HEK293 (cell line): ENCODE measurements at regions of chrX and their contacts with region 1.

Region 1: GRCh38 chrX:63050225-63050624 is 300.9 kb downstream of the SPIN4 start:
- H3K4me3 ChIP-seq: no peak overlapping the region
- H3K27ac ChIP-seq: no peak overlapping the region
- H3K4me1 ChIP-seq: no peaks in the 10 kb centered on the region
- CTCF ChIP-seq: no peak

Region 2: DNA sequence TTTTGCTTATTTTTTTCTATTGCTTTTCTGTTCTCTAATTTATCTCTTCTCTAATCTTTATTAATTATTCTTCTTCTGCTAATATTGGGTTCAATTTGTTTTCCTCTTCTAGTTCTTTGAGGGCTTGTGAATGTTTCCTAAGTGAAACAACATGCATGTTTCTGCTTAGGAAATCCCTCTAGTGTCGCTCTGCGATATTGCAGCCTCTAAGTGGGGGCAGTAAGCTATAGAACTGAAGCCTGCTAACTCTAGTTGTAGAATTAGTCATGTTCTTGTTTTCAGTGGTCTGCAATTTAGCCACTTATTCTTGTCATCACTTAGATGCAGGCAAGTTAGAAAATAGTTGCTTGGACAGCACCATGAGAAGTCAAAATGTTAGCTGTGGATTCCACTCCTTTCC is 78.3 kb after region 1 on chrX:
- CTCF ChIA-PET with region 1: interaction called, 10 read pairs
- POLR2A ChIA-PET with region 1: no interaction called
- H3K4me3 ChIP-seq: no peak overlapping the region
- H3K27ac ChIP-seq: no peak overlapping the region
- H3K4me1 ChIP-seq: no peaks in the 10 kb centered on the region
- CTCF ChIP-seq: 0 out of 2 replicates have a peak, but pooled peaks have one; percentile 8